ENCODE measurements at regions of chr11 and their contacts with region 1.

Region 1: GRCh38 chr11:71448257-71449171 is at the start of gene DHCR7:
- DNase-seq: peak; percentile 99 to 100
- H3K4me3 ChIP-seq: peak within 1 kb of the TSS; percentile 88
- H3K4me3 Mint-ChIP-seq: peak within 1 kb of the TSS; percentile 86
- H3K27ac Mint-ChIP-seq: peak within 1 kb of the TSS; percentile 59
- H3K4me1 ChIP-seq: peaks cover 21% of the 10 kb centered on the region
- H3K4me1 Mint-ChIP-seq: peaks cover 36% of the 10 kb centered on the region
- H3K27me3 ChIP-seq: no peaks in the 10 kb centered on the region
- H3K27me3 Mint-ChIP-seq: no peaks in the 10 kb centered on the region
- CTCF ChIP-seq: no peak
- total RNA-seq, gene DHCR7: 344 and 371 TPM in 2 replicates

Region 2: GRCh38 chr11:71372693-71373657 is 75.5 kb before region 1 on chr11:
- CTCF ChIA-PET with region 1: interaction called, 12 read pairs
- POLR2A ChIA-PET with region 1: no interaction called
- intact Hi-C with region 1: no loop called
- DNase-seq: peak in 1 of 2 experiments; percentile 60
- H3K4me3 ChIP-seq: no peak overlapping the region
- H3K4me3 Mint-ChIP-seq: no peak overlapping the region
- H3K27ac Mint-ChIP-seq: no peak overlapping the region
- H3K4me1 ChIP-seq: no peaks in the 10 kb centered on the region
- H3K4me1 Mint-ChIP-seq: no peaks in the 10 kb centered on the region
- H3K27me3 ChIP-seq: no peaks in the 10 kb centered on the region
- H3K27me3 Mint-ChIP-seq: peaks cover 11% of the 10 kb centered on the region
- CTCF ChIP-seq: peak; percentile 74 to 90

Region 3: GRCh38 chr11:71470946-71471345 is 22.4 kb after region 1 on chr11:
- CTCF ChIA-PET with region 1: interaction called, 5 read pairs
- POLR2A ChIA-PET with region 1: no interaction called
- intact Hi-C with region 1: loop called (anchors 1 kb)
- DNase-seq: peak; percentile 66 to 69
- H3K4me3 ChIP-seq: no peak overlapping the region
- H3K4me3 Mint-ChIP-seq: peak overlapping the region; percentile 30
- H3K27ac Mint-ChIP-seq: peak overlapping the region; percentile 4
- H3K4me1 ChIP-seq: peaks cover 23% of the 10 kb centered on the region
- H3K4me1 Mint-ChIP-seq: peaks cover 29% of the 10 kb centered on the region
- H3K27me3 ChIP-seq: no peaks in the 10 kb centered on the region
- H3K27me3 Mint-ChIP-seq: no peaks in the 10 kb centered on the region
- CTCF ChIP-seq: no peak

Region 4: DNA sequence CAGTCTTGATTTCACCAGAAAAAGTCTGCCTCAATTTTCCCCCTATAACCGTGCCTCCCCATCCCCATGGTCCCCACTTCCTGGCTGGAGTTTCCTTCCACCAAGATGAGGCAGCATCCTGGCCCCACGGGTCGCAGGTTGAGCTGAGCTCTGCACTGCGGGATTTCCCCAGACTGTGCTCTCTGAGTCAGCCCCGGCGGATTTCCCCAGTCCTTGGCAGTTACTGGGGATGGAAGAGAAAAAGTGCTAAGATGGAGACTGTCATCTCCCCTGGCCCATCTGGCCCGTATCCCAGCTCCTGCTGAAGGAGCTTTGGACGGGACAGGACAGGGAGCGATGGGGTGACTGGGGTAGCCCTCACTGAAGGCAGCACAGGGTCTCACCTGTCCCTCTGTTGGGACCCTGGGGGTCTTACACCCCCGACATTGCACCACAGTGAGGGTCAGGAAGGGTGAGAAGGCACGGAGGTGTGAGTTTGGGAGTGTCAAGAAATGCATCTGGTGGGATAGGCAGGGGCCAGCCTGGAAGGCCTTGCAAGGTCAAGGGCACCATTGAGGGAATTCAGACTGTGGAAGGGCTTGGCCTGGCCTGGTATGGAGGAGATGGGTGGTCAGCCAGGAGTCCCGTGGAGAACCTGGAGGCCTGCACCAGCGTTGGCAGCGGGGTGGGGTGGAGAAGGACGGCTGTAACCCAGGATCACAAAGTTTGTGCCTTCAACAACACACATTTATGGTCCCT is 41.0 kb after region 1 on chr11:
- CTCF ChIA-PET with region 1: interaction called, 6 read pairs
- POLR2A ChIA-PET with region 1: interaction called, 6 read pairs
- intact Hi-C with region 1: loop called (anchors 2 kb)
- DNase-seq: peak in 1 of 2 experiments; percentile 34
- H3K4me3 ChIP-seq: no peak overlapping the region
- H3K4me3 Mint-ChIP-seq: no peak overlapping the region
- H3K27ac Mint-ChIP-seq: peak overlapping the region; percentile 40
- H3K4me1 ChIP-seq: peaks cover 23% of the 10 kb centered on the region
- H3K4me1 Mint-ChIP-seq: peaks cover 21% of the 10 kb centered on the region
- H3K27me3 ChIP-seq: no peaks in the 10 kb centered on the region
- H3K27me3 Mint-ChIP-seq: no peaks in the 10 kb centered on the region
- CTCF ChIP-seq: no peak

Region 5: DNA sequence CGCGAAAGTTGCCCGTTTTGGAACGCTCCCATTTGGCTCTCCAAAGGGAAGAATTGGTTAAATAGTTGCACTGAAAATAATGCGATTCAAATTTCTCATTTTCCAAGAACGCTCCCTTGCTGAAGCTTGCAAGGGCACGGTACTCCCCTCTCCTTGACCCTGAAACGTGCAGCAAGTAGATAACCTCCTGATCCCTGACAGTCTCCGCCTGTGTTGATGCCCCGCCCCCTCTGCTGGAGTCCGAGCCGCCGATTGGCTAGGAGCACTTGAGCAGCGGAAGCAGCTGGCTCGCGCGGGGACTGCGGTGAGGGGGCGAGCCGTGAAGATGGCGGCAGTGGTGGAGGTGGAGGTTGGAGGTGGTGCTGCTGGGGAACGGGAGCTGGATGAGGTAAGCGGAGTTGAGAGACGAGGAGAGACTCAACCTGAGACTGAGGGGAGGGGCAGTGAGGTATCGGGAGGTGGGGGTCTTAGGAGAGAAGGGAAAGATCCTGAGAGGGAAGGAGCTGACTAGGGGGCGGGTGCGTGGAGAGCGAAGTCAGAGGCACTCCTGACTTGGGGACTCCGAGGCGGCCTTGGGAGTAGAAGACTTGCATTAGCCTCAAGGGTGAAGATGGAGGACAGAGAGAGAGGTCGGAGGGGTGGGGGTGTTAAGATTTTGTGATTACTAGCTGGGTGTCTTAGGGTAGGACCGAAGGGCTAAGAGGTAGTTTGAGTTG is 480.4 kb after region 1 on chr11 and contains the start of gene RNF121:
- CTCF ChIA-PET with region 1: no interaction called
- POLR2A ChIA-PET with region 1: interaction called, 11 read pairs
- intact Hi-C with region 1: no loop called
- DNase-seq: peak; percentile 99 to 100
- H3K4me3 ChIP-seq: peak within 1 kb of the TSS; percentile 74
- H3K4me3 Mint-ChIP-seq: peak within 1 kb of the TSS; percentile 90
- H3K27ac Mint-ChIP-seq: peak within 1 kb of the TSS; percentile 99
- H3K4me1 ChIP-seq: peaks cover 9% of the 10 kb centered on the region
- H3K4me1 Mint-ChIP-seq: peaks cover 15% of the 10 kb centered on the region
- H3K27me3 ChIP-seq: no peaks in the 10 kb centered on the region
- H3K27me3 Mint-ChIP-seq: no peaks in the 10 kb centered on the region
- CTCF ChIP-seq: no peak
- total RNA-seq, gene RNF121: 146 and 153 TPM in 2 replicates

Measured in Caco-2 (cell line).